ENCODE measurements at regions of chr2 and their contacts with region 1.

Region 1: GRCh38 chr2:69804416-69804815 is 25.0 kb upstream of the GMCL1 start:
- DNase-seq: no peak
- ATAC-seq: no peak
- H3K4me3 ChIP-seq: no peak overlapping the region
- H3K27ac ChIP-seq: no peak overlapping the region
- H3K4me1 ChIP-seq: peaks cover 0 to 2% of the 10 kb centered on the region in 2 donors
- H3K27me3 ChIP-seq: no peaks in the 10 kb centered on the region

Region 2: DNA sequence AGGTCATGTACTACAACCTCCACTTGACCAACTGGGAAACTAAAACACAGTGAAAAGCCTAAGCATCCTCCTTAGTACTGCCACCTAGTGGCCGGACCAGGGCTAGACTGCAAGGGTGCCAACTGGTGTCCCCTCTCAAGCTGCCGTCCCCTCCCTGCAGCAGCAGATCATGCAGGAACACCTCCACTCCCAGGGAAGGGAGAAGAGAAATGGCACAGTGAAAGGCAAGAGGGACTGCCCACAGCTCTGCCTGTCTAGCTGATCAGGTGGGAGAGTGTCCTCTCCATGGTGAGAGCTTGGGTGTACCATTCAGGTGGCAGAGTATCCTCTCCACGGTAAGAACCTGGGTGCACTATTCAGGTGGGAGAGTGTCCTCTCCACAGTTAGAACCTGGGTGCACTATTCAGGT is 239.0 kb before region 1 on chr2:
- intact Hi-C with region 1: loop called in 1 of 2 experiments (anchors 10 kb)
- DNase-seq: peak; percentile 65 to 83
- ATAC-seq: peak; percentile 81
- H3K4me3 ChIP-seq: no peak overlapping the region
- H3K27ac ChIP-seq: no peak overlapping the region
- H3K4me1 ChIP-seq: peaks cover 0 to 3% of the 10 kb centered on the region in 2 donors
- H3K27me3 ChIP-seq: no peaks in the 10 kb centered on the region

Region 3: DNA sequence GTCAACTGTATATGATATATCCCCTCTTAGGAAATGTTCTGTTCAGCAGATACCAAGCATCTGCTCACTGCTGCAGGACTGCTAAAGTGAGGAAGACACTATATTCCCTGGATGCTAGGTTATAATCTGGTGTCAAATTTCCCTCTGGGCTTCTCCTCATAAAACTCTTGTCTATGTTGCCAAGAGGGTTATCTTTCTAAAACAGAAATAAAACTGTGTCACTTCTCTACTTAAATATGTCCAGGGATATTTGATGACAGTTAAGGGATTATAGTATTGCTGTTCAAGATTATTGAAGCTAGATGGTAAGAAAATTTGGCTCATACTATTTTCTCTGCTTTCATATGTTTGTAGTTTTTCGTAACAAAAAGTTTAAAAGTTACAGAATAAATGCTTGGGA is 58.9 kb after region 1 on chr2:
- intact Hi-C with region 1: no loop called
- DNase-seq: no peak
- ATAC-seq: no peak
- H3K4me3 ChIP-seq: no peak overlapping the region
- H3K27ac ChIP-seq: no peak overlapping the region
- H3K4me1 ChIP-seq: no peaks in the 10 kb centered on the region
- H3K27me3 ChIP-seq: no peaks in the 10 kb centered on the region